ENCODE measurements at regions of chr1 and their contacts with region 1.

Region 1: DNA sequence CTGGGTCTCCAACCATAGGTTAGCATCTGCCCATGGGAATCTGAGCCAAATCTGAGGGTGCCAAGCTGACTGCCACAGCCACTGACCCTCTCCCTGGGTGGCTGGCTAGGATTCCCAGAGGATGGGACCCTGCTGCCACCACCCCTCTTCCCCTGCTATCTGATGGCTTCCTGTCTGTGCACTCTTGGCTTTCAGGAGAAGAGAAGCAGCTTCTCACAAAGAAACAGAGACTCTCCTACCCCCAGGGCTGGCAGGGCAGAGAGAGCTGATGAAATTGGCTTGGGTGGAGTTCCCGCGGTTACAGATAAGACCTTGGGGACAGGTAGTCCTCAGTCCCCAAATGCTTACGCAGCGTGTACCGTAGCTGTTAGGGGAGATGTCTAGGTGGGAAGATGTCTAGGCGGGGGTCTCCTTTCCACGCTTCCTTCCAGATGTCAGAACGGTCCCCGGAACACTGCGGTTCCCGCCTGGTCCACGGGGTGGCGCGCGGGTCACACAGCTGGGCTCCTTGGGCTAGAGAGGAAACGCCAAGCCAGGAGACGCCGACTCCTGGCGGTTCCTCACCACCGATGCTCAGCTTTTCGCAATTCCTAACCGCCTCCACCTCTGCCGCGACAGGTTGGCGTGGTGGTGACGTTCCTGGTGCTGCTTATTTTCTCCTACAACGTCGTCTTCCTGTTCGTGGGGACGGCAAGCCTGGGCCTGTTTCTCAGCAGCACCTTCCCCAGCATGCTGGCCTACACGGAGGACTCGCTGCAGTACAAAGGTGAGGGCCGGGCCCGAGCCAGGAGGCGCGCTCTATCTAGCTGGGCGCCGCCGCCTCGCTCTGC is 40.1 kb downstream of the ELK4 start:
- DNase-seq: peak; percentile 85 to 89 (median 86)
- H3K4me3 ChIP-seq: peak overlapping the region in 1 of 2 donors; percentile 61
- H3K4me3 Mint-ChIP-seq: peak overlapping the region; percentile 87 to 93 (median 90)
- H3K27ac ChIP-seq: peak overlapping the region; percentile 52
- H3K27ac Mint-ChIP-seq: peak overlapping the region; percentile 82 to 96 (median 89)
- H3K4me1 ChIP-seq: peaks cover 21% of the 10 kb centered on the region
- H3K4me1 Mint-ChIP-seq: peaks cover 17 to 34% (median 25%) of the 10 kb centered on the region in 4 donors
- H3K27me3 ChIP-seq: no peaks in the 10 kb centered on the region
- H3K27me3 Mint-ChIP-seq: no peaks in the 10 kb centered on the region

Region 2: DNA sequence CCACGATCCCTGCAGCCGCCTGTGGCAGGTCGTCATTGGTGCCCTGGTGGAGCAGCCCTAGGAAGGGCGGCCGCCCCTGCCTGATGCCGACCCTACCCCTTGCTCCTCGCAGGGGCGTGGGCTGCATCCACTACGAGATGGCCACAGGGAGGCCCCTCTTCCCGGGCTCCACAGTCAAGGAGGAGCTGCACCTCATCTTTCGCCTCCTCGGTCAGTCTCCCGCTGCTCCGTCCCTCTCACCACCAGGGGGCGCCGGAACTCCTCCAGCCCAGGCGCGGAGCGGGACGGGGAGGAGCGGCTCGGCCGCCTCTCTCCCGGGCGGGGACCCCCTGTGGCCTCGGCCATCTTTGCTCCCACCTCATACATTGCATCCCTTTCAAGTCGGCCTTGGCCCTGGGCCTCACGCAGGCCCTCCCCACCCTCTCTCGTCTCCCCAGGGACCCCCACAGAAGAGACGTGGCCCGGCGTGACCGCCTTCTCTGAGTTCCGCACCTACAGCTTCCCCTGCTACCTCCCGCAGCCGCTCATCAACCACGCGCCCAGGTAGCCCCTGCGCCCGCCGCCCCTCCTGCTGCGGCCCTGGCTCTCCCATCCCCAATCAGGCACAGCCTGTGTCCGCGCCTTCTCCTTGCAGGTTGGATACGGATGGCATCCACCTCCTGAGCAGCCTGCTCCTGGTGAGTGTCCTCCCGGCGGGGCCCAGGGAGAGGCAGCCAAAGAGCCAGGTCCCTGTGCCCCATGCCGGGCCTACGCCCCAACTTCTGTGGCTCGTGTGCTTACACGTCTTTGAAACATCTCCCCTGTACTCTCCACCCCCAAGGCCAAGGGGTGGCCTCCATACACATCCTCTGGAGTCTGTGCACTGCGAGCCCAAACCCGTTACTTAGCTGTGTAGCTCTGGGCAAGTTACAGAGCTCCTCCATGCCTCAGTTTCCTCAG is 62.6 kb before region 1 on chr1:
- CTCF ChIA-PET with region 1: interaction called, 24 read pairs
- POLR2A ChIA-PET with region 1: no interaction called
- intact Hi-C with region 1: no loop called
- DNase-seq: peak; percentile 66 to 76 (median 69)
- H3K4me3 ChIP-seq: no peak overlapping the region
- H3K4me3 Mint-ChIP-seq: peak overlapping the region in 5 of 8 donors; percentile 26 to 73 (median 39)
- H3K27ac ChIP-seq: no peak overlapping the region
- H3K27ac Mint-ChIP-seq: peak overlapping the region in 1 of 7 donors; percentile 73
- H3K4me1 ChIP-seq: no peaks in the 10 kb centered on the region
- H3K4me1 Mint-ChIP-seq: peaks cover 0 to 5% (median 4%) of the 10 kb centered on the region in 4 donors
- H3K27me3 ChIP-seq: no peaks in the 10 kb centered on the region
- H3K27me3 Mint-ChIP-seq: peaks cover 3 to 4% of the 10 kb centered on the region in 2 donors

Region 3: GRCh38 chr1:205561501-205562203 is 30.1 kb before region 1 on chr1:
- CTCF ChIA-PET with region 1: no interaction called
- POLR2A ChIA-PET with region 1: no interaction called
- intact Hi-C with region 1: no loop called
- DNase-seq: no peak
- H3K4me3 ChIP-seq: no peak overlapping the region
- H3K4me3 Mint-ChIP-seq: no peak overlapping the region
- H3K27ac ChIP-seq: no peak overlapping the region
- H3K27ac Mint-ChIP-seq: no peak overlapping the region
- H3K4me1 ChIP-seq: no peaks in the 10 kb centered on the region
- H3K4me1 Mint-ChIP-seq: no peaks in the 10 kb centered on the region
- H3K27me3 ChIP-seq: peaks cover 7% of the 10 kb centered on the region
- H3K27me3 Mint-ChIP-seq: peaks cover 18 to 34% of the 10 kb centered on the region in 2 donors

Region 4: GRCh38 chr1:205610036-205610435 is 18.3 kb after region 1 on chr1:
- CTCF ChIA-PET with region 1: interaction called, 13 read pairs
- POLR2A ChIA-PET with region 1: no interaction called
- intact Hi-C with region 1: no loop called
- DNase-seq: no peak
- H3K4me3 ChIP-seq: no peak overlapping the region
- H3K4me3 Mint-ChIP-seq: no peak overlapping the region
- H3K27ac ChIP-seq: no peak overlapping the region
- H3K27ac Mint-ChIP-seq: peak overlapping the region in 5 of 7 donors; percentile 2 to 82 (median 22)
- H3K4me1 ChIP-seq: peaks cover 34% of the 10 kb centered on the region
- H3K4me1 Mint-ChIP-seq: peaks cover 36 to 42% (median 40%) of the 10 kb centered on the region in 4 donors
- H3K27me3 ChIP-seq: no peaks in the 10 kb centered on the region
- H3K27me3 Mint-ChIP-seq: no peaks in the 10 kb centered on the region

Region 5: DNA sequence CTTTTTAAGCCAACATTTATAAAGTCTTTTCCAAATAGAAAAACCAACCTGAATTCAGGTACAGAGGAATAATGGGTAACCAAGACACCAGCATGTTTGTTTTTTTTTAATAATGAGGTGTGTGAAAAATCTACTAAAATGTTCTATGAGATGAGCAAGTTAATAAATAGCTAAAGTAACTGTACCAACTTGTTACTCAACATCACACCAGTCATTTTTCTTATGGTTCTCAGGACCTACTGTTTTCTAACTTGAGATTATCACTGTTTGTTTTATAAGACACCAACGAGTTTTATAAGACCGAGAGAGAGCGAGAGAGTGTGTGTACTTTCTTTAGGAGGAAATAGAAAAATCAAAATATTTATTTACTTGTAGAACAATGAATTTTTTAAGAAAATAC is 27.6 kb after region 1 on chr1:
- CTCF ChIA-PET with region 1: interaction called, 18 read pairs
- POLR2A ChIA-PET with region 1: interaction called, 3 read pairs
- intact Hi-C with region 1: no loop called
- DNase-seq: no peak
- H3K4me3 ChIP-seq: no peak overlapping the region
- H3K4me3 Mint-ChIP-seq: no peak overlapping the region
- H3K27ac ChIP-seq: no peak overlapping the region
- H3K27ac Mint-ChIP-seq: peak overlapping the region in 1 of 7 donors; percentile 64
- H3K4me1 ChIP-seq: no peaks in the 10 kb centered on the region
- H3K4me1 Mint-ChIP-seq: peaks cover 17 to 25% (median 22%) of the 10 kb centered on the region in 4 donors
- H3K27me3 ChIP-seq: no peaks in the 10 kb centered on the region
- H3K27me3 Mint-ChIP-seq: no peaks in the 10 kb centered on the region

Region 6: GRCh38 chr1:205711104-205712020 is 119.6 kb after region 1 on chr1:
- CTCF ChIA-PET with region 1: interaction called, 62 read pairs
- POLR2A ChIA-PET with region 1: interaction called, 4 read pairs
- intact Hi-C with region 1: loop called (anchors 1 kb)
- DNase-seq: peak; percentile 54 to 67 (median 62)
- H3K4me3 ChIP-seq: no peak overlapping the region
- H3K4me3 Mint-ChIP-seq: no peak overlapping the region
- H3K27ac ChIP-seq: no peak overlapping the region
- H3K27ac Mint-ChIP-seq: peak overlapping the region in 4 of 7 donors; percentile 25 to 68 (median 56)
- H3K4me1 ChIP-seq: peaks cover 3% of the 10 kb centered on the region
- H3K4me1 Mint-ChIP-seq: peaks cover 5 to 14% (median 11%) of the 10 kb centered on the region in 4 donors
- H3K27me3 ChIP-seq: no peaks in the 10 kb centered on the region
- H3K27me3 Mint-ChIP-seq: no peaks in the 10 kb centered on the region